CD8-positive, alpha-beta memory T cell (primary cell): ENCODE measurements at regions of chr6 and their contacts with region 1.

Region 1: GRCh38 chr6:28838634-28839442 is 84.9 kb downstream of the TRIM27 start:
- DNase-seq: peak; percentile 65 to 86 (median 72)
- H3K4me3 ChIP-seq: peak overlapping the region; percentile 73
- H3K4me3 Mint-ChIP-seq: peak overlapping the region; percentile 83 to 97 (median 91)
- H3K27ac ChIP-seq: peak overlapping the region; percentile 52
- H3K27ac Mint-ChIP-seq: peak overlapping the region; percentile 66 to 91 (median 85)
- H3K4me1 ChIP-seq: peaks cover 7% of the 10 kb centered on the region
- H3K4me1 Mint-ChIP-seq: peaks cover 22 to 28% (median 25%) of the 10 kb centered on the region in 3 donors
- H3K27me3 ChIP-seq: no peaks in the 10 kb centered on the region
- H3K27me3 Mint-ChIP-seq: peaks cover 26 to 46% of the 10 kb centered on the region in 2 donors

Region 2: GRCh38 chr6:28811873-28812272 is 27.0 kb before region 1 on chr6:
- CTCF ChIA-PET with region 1: no interaction called
- POLR2A ChIA-PET with region 1: no interaction called
- DNase-seq: no peak
- H3K4me3 ChIP-seq: no peak overlapping the region
- H3K4me3 Mint-ChIP-seq: peak overlapping the region in 3 of 7 donors; percentile 27 to 61 (median 29)
- H3K27ac ChIP-seq: no peak overlapping the region
- H3K27ac Mint-ChIP-seq: peak overlapping the region in 2 of 8 donors; percentile 51 to 53
- H3K4me1 ChIP-seq: no peaks in the 10 kb centered on the region
- H3K4me1 Mint-ChIP-seq: peaks cover 0 to 17% (median 10%) of the 10 kb centered on the region in 3 donors
- H3K27me3 ChIP-seq: peaks cover 88% of the 10 kb centered on the region
- H3K27me3 Mint-ChIP-seq: peaks cover 97 to 99% of the 10 kb centered on the region in 2 donors

Region 3: DNA sequence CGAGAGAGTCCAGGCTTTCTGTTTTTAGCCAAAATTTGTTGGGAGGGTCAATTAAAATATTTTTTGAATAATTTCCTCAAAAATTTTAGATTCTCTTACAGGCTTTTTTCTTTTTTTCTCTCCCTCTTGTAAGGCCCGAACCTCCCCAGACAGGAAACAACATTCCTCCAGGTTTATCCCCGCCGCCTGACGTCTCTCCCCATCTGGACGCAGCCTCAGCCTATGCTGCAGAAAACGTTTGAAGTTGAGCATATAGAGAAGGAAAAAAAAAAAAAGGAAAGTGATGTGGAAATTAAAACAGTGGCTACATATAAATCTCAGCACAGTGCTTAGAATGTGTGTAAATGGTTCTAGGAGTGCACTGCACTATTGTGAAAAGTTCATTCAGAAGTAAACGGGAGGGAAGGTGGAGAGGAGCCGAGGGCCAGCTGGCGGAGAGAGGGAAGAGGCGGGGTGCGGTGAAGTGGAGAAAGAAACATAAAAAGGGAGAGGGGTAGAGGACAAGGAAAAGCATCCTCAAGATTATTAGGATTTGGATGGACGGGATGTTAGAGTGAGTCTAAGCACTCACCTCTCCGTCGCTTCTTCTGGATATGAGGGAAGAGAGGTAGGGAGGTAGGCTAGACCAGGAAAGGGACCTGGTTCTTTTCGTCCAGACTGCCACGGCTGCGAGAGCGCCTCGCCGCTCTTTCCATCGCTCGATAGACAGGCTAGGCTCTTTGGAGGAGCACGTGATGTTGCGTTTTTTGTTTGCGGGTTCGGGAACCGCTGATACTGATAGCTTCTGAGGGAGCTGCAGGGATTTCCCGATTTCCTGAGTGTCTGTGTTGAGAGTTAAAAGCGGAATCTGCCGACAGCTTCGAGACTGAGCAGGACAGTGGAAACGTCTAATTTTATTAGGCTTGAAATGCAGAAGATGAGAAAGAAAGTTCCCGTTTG is 13.8 kb before region 1 on chr6:
- CTCF ChIA-PET with region 1: interaction called, 14 read pairs
- POLR2A ChIA-PET with region 1: no interaction called
- DNase-seq: no peak
- H3K4me3 ChIP-seq: no peak overlapping the region
- H3K4me3 Mint-ChIP-seq: peak overlapping the region in 4 of 7 donors; percentile 4 to 65 (median 10)
- H3K27ac ChIP-seq: no peak overlapping the region
- H3K27ac Mint-ChIP-seq: peak overlapping the region in 2 of 8 donors; percentile 2
- H3K4me1 ChIP-seq: no peaks in the 10 kb centered on the region
- H3K4me1 Mint-ChIP-seq: peaks cover 8 to 12% (median 10%) of the 10 kb centered on the region in 3 donors
- H3K27me3 ChIP-seq: peaks cover 52% of the 10 kb centered on the region
- H3K27me3 Mint-ChIP-seq: peaks cover 74 to 89% of the 10 kb centered on the region in 2 donors

Region 4: DNA sequence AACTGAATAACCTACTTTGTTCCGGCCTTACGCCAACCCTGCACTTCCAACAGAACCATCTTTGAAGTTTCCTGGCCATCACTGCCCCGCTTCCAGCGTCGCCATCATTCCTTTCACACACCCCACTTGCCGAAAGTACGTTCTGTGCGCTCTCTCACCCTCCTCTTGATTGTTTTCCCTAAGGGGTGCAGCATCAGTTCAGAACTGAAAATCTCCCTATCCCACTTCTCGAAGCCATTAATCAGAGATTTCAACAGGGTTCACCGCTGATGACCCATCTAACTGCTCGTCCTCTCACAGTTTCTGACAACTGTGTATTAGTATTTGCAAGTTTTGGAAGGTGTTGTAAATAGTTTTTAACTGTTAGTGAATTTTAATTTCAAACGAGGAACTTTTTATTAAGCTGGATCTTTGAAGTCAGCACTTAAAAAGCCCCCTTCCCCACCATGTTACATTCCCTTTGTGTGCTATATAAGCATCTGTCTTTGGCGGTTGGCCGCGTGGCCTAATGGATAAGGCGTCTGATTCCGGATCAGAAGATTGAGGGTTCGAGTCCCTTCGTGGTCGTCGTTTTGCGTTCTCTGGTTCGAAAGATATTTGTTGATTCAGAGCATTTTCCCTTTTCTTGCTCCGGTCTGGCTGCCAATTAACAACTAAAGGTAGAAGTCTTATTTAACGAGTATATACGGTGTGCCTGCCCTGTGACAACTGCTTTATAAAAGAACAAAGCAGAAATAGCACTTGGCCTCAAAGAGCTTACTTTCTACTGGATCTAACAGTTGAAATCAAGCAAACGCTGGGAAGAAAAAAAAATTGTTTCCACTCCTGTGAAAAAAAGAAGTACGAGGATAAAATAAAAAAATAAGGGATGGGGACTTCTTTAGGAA is 42.3 kb after region 1 on chr6:
- CTCF ChIA-PET with region 1: interaction called, 20 read pairs
- POLR2A ChIA-PET with region 1: interaction called, 6 read pairs
- DNase-seq: peak in 3 of 5 donors; percentile 23 to 64 (median 55)
- H3K4me3 ChIP-seq: peak overlapping the region; percentile 25
- H3K4me3 Mint-ChIP-seq: peak overlapping the region; percentile 59 to 82 (median 74)
- H3K27ac ChIP-seq: no peak overlapping the region
- H3K27ac Mint-ChIP-seq: peak overlapping the region in 4 of 8 donors; percentile 66 to 87 (median 74)
- H3K4me1 ChIP-seq: peaks cover 34% of the 10 kb centered on the region
- H3K4me1 Mint-ChIP-seq: peaks cover 33 to 47% (median 38%) of the 10 kb centered on the region in 3 donors
- H3K27me3 ChIP-seq: no peaks in the 10 kb centered on the region
- H3K27me3 Mint-ChIP-seq: peaks cover 17% of the 10 kb centered on the region in 2 donors

Region 5: GRCh38 chr6:28923318-28924102 is 84.7 kb after region 1 on chr6 and contains the start of gene TRIM27:
- CTCF ChIA-PET with region 1: interaction called, 30 read pairs
- POLR2A ChIA-PET with region 1: interaction called, 5 read pairs
- DNase-seq: peak; percentile 73 to 85 (median 75)
- H3K4me3 ChIP-seq: peak within 1 kb of the TSS; percentile 59
- H3K4me3 Mint-ChIP-seq: peak within 1 kb of the TSS; percentile 90 to 98 (median 95)
- H3K27ac ChIP-seq: peak within 1 kb of the TSS; percentile 72
- H3K27ac Mint-ChIP-seq: peak within 1 kb of the TSS; percentile 87 to 97 (median 94)
- H3K4me1 ChIP-seq: peaks cover 42% of the 10 kb centered on the region
- H3K4me1 Mint-ChIP-seq: peaks cover 31 to 48% (median 44%) of the 10 kb centered on the region in 3 donors
- H3K27me3 ChIP-seq: no peaks in the 10 kb centered on the region
- H3K27me3 Mint-ChIP-seq: peaks cover 0 to 4% of the 10 kb centered on the region in 2 donors
- total RNA-seq, gene TRIM27: 67.7 to 69.2 TPM

Region 6: GRCh38 chr6:28981833-28982475 is 143.1 kb after region 1 on chr6:
- CTCF ChIA-PET with region 1: interaction called, 48 read pairs
- POLR2A ChIA-PET with region 1: interaction called, 13 read pairs
- DNase-seq: peak; percentile 53 to 87 (median 81)
- H3K4me3 ChIP-seq: peak overlapping the region; percentile 99
- H3K4me3 Mint-ChIP-seq: peak overlapping the region; percentile 92 to 97 (median 95)
- H3K27ac ChIP-seq: peak overlapping the region; percentile 77
- H3K27ac Mint-ChIP-seq: peak overlapping the region; percentile 85 to 98 (median 94)
- H3K4me1 ChIP-seq: peaks cover 31% of the 10 kb centered on the region
- H3K4me1 Mint-ChIP-seq: peaks cover 53 to 78% (median 72%) of the 10 kb centered on the region in 3 donors
- H3K27me3 ChIP-seq: no peaks in the 10 kb centered on the region
- H3K27me3 Mint-ChIP-seq: peaks cover 43 to 49% of the 10 kb centered on the region in 2 donors

Region 7: GRCh38 chr6:29016559-29017427 is 178.0 kb after region 1 on chr6:
- CTCF ChIA-PET with region 1: interaction called, 153 read pairs
- POLR2A ChIA-PET with region 1: interaction called, 13 read pairs
- DNase-seq: peak; percentile 70 to 87 (median 77)
- H3K4me3 ChIP-seq: peak overlapping the region; percentile 84
- H3K4me3 Mint-ChIP-seq: peak overlapping the region; percentile 80 to 91 (median 86)
- H3K27ac ChIP-seq: peak overlapping the region; percentile 28
- H3K27ac Mint-ChIP-seq: peak overlapping the region; percentile 24 to 84 (median 73)
- H3K4me1 ChIP-seq: peaks cover 12% of the 10 kb centered on the region
- H3K4me1 Mint-ChIP-seq: peaks cover 12 to 21% (median 19%) of the 10 kb centered on the region in 3 donors
- H3K27me3 ChIP-seq: no peaks in the 10 kb centered on the region
- H3K27me3 Mint-ChIP-seq: peaks cover 21 to 49% of the 10 kb centered on the region in 2 donors